Common myeloid progenitor, CD34-positive (primary cell): ENCODE measurements at regions of chr6 and their contacts with region 1.

Region 1: GRCh38 chr6:149431905-149432775 is 32.1 kb downstream of the SUMO4 start:
- DNase-seq: peak; percentile 82 to 89 (median 83)
- H3K4me3 ChIP-seq: peak overlapping the region in 2 of 7 experiments; percentile 56 to 58
- H3K27ac ChIP-seq: no peak overlapping the region
- H3K4me1 ChIP-seq: peaks cover 0 to 10% (median 4%) of the 10 kb centered on the region in 4 experiments
- H3K27me3 ChIP-seq: no peaks in the 10 kb centered on the region

Region 2: GRCh38 chr6:149043476-149044130 is 388.5 kb before region 1 on chr6:
- CTCF ChIA-PET with region 1: interaction called, 11 read pairs
- POLR2A ChIA-PET with region 1: no interaction called
- DNase-seq: peak in 1 of 3 donors; percentile 36
- H3K4me3 ChIP-seq: no peak overlapping the region
- H3K27ac ChIP-seq: no peak overlapping the region
- H3K4me1 ChIP-seq: peaks cover 9 to 30% (median 16%) of the 10 kb centered on the region in 4 experiments
- H3K27me3 ChIP-seq: no peaks in the 10 kb centered on the region

Region 3: DNA sequence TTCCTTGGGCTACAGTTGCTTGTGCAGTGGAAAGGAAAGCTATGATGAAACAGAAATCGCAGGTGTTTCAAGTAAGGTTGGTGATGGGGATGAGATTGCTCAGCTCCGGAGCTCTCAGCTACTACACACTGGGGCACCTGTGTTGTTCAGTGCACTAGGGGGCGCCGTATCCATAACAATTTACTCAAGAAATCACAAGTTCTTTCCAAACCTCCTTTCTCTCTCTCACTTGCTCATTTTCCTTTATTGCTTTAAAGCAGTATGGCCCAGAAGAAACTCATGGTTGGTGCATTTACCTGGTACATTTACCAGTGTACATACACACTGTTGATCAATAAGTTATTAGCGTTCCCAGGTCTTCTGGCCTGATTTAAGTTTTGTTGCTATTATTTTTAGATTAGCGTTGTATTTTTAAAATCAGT is 349.8 kb before region 1 on chr6:
- CTCF ChIA-PET with region 1: interaction called, 17 read pairs
- POLR2A ChIA-PET with region 1: no interaction called
- DNase-seq: peak; percentile 82 to 90 (median 88)
- H3K4me3 ChIP-seq: no peak overlapping the region
- H3K27ac ChIP-seq: no peak overlapping the region
- H3K4me1 ChIP-seq: peaks cover 10 to 53% (median 18%) of the 10 kb centered on the region in 4 experiments
- H3K27me3 ChIP-seq: no peaks in the 10 kb centered on the region

Region 4: GRCh38 chr6:149419696-149420404 is 12.3 kb before region 1 on chr6:
- CTCF ChIA-PET with region 1: interaction called, 35 read pairs
- POLR2A ChIA-PET with region 1: no interaction called
- DNase-seq: no peak
- H3K4me3 ChIP-seq: no peak overlapping the region
- H3K27ac ChIP-seq: no peak overlapping the region
- H3K4me1 ChIP-seq: peaks cover 0 to 3% (median 0%) of the 10 kb centered on the region in 4 experiments
- H3K27me3 ChIP-seq: no peaks in the 10 kb centered on the region

Region 5: GRCh38 chr6:149513915-149514314 is 81.8 kb after region 1 on chr6:
- CTCF ChIA-PET with region 1: interaction called, 13 read pairs
- POLR2A ChIA-PET with region 1: interaction called, 3 read pairs
- DNase-seq: no peak
- H3K4me3 ChIP-seq: no peak overlapping the region
- H3K27ac ChIP-seq: no peak overlapping the region
- H3K4me1 ChIP-seq: peaks cover 0 to 2% (median 0%) of the 10 kb centered on the region in 4 experiments
- H3K27me3 ChIP-seq: no peaks in the 10 kb centered on the region

Region 6: DNA sequence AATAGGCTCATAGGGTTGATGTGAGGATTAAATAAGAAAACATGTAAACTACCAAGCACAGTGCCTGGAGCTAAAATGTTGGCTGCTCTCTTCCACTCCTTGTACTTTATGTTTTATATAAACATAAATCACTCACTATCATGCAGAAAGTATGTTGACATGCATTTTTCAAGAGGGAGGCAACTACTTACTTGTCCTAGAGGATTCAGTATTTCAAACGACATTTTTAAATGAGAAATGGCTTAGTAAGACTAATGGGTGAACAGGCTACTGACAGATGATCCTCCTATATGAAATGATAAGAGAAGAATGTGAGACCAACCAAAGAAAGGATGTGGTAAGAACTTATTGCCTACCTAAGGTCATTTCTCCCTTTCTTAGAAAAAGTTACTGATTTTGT is 264.8 kb after region 1 on chr6:
- CTCF ChIA-PET with region 1: no interaction called
- POLR2A ChIA-PET with region 1: no interaction called
- DNase-seq: no peak
- H3K4me3 ChIP-seq: no peak overlapping the region
- H3K27ac ChIP-seq: no peak overlapping the region
- H3K4me1 ChIP-seq: no peaks in the 10 kb centered on the region
- H3K27me3 ChIP-seq: no peaks in the 10 kb centered on the region